ENCODE measurements at regions of chr15 and their contacts with region 1.

Region 1: GRCh38 chr15:38002883-38003477 is 68.5 kb downstream of the TMCO5A start:
- DNase-seq: peak; percentile 80
- H3K4me3 ChIP-seq: no peak overlapping the region
- H3K27ac ChIP-seq: no peak overlapping the region
- H3K4me1 ChIP-seq: 0 out of 2 replicates have a peak, but pooled peaks cover 4% of the 10 kb centered on the region
- H3K27me3 ChIP-seq: no peaks in the 10 kb centered on the region

Region 2: DNA sequence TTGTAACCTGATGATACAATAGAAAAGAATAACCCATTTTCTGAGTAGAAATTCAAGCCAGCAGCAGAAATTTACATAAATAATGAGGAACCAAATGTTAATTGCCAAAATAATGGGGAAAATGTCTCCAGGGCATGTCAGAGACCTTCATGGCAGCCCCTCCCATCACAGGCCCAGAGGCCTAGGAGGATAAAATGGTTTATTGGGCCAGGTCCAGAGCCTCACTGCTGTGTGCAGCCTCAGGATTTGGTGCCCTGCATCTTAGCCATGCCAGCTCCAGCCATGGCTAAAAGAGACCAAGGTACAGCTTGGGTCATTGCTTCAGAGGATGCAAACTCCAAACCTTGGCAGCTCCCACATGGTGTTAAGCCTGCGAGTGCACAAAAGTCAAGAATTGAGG is 550.5 kb before region 1 on chr15:
- in situ Hi-C with region 1: no loop called
- DNase-seq: no peak
- H3K4me3 ChIP-seq: no peak overlapping the region
- H3K27ac ChIP-seq: no peak overlapping the region
- H3K4me1 ChIP-seq: no peaks in the 10 kb centered on the region
- H3K27me3 ChIP-seq: no peaks in the 10 kb centered on the region

Region 3: DNA sequence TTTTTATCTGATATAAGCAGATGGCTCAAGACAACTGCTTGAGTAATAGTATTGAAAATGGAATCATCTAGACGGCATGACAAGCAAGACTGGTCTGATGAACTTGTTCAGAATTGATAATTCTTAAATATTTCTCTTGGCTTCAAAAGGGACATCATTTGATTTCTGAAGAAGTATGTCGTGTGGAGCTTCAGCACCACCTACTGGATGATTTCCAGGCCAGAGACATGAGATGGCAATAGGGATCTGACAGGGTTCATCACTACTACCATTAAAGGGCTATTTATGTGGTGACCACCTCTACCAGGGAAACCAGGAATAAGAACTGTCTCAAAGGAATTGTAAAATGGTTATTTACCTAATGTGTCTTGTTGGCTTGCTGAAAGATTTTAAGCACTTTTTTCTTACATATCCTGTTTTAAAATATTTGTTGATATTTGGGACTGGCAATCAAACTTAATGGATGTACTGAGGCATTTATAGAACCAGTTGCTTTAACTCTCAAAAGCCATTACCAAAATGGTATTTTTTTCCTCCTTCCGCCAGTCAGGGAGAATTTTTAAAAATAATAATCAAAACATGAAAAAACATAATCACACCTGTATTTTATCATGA is 351.4 kb after region 1 on chr15:
- in situ Hi-C with region 1: loop called (anchors 10 kb)
- DNase-seq: peak; percentile 76
- H3K4me3 ChIP-seq: no peak overlapping the region
- H3K27ac ChIP-seq: no peak overlapping the region
- H3K4me1 ChIP-seq: 0 out of 2 replicates have a peak, but pooled peaks cover 5% of the 10 kb centered on the region
- H3K27me3 ChIP-seq: no peaks in the 10 kb centered on the region

Region 4: DNA sequence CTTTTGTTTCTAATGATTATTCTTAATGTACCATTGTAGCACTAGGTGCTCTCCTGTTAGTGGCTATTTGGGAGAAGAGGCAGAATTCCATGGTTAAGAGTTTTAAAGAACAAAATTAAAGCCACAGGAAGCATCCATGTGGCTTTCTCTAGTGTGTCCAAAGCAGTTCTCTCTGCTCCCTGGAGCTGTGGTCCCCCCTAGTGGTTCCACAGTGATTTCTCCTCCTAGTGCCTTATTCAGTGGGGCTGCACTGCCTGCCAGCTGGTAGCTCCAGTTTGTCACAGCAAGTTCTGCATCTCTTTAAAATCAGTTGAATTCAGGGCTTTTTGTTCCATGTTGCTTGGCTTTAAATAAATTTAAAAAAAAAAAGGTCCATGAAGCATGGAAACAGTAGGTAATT is 411.4 kb after region 1 on chr15:
- in situ Hi-C with region 1: loop called (anchors 5 kb)
- DNase-seq: peak; percentile 85
- H3K4me3 ChIP-seq: no peak overlapping the region
- H3K27ac ChIP-seq: no peak overlapping the region
- H3K4me1 ChIP-seq: no peaks in the 10 kb centered on the region
- H3K27me3 ChIP-seq: no peaks in the 10 kb centered on the region

Measured in GM23248 (cell line).